Posterior vena cava (tissue), 2 donors: ENCODE measurements at regions of chr9 and their contacts with region 1.

Region 1: GRCh38 chr9:127528422-127529084 is 77.2 kb downstream of the LRSAM1 start:
- DNase-seq: no peak

Region 2: GRCh38 chr9:127538841-127539258 is 10.3 kb after region 1 on chr9:
- intact Hi-C with region 1: loop called in 1 of 2 experiments (anchors 1 kb)
- DNase-seq: no peak